ENCODE measurements at regions of chr21 and their contacts with region 1.

Region 1: DNA sequence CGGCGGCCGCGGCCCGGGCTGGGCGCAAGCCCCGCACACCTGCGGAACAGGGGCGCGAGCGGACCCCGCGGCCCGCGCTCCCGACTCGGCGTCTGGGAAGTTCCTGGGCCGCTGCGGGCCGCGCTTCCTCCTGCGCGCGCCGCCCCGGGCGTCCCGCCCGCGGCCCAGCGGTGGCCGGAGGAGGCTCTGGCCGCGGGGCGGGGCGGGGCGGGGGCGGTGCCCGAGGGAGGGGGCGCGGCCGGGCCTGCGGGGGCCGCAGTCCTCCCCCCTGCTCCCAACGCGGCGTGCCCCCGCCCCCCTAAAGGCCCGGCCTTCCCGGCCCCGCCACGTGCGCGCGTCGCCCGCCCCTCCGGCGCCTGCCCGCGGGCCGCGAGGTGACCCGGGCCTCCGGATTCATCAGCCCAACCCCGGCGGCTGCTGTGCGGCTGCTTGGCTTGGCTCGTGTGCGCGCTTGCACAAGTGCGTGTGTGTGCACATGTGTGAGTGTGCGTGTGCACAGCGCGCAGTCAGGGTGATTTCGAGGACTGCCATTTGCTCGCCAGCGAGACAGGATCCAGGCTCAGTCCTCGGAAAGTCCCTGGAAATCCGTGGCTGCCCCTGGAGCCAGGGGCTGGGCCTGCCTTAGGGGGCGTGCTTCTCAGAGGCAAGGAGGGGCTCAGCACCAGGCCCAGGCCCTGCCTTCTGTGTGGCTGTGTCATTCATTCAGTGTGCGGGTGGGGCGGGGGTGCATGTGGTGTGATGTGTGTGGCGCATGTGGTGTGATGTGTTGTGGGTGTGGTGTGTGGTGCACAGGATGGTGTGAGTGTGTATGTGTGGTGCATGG is at the start of gene C2CD2:
- DNase-seq: peak; percentile 65 to 74 (median 67)
- ATAC-seq: peak; percentile 84
- H3K4me3 ChIP-seq: peak within 1 kb of the TSS; percentile 65 to 88
- H3K27ac ChIP-seq: peak within 1 kb of the TSS; percentile 25 to 72 (median 62)
- H3K4me1 ChIP-seq: peaks cover 33% of the 10 kb centered on the region
- H3K27me3 ChIP-seq: no peaks in the 10 kb centered on the region
- CTCF ChIP-seq: peak in 1 of 7 experiments; percentile 2
- POLR2A ChIP-seq: peak in 1 of 3 donors; percentile 5
- total RNA-seq, gene C2CD2: 10.4 to 25.4 TPM

Region 2: GRCh38 chr21:41895643-41896493 is 58.2 kb before region 1 on chr21:
- intact Hi-C with region 1: loop called (anchors 10 kb)
- DNase-seq: no peak
- ATAC-seq: no peak
- H3K4me3 ChIP-seq: no peak overlapping the region
- H3K27ac ChIP-seq: no peak overlapping the region
- H3K4me1 ChIP-seq: peaks cover 6% of the 10 kb centered on the region
- H3K27me3 ChIP-seq: no peaks in the 10 kb centered on the region
- CTCF ChIP-seq: no peak
- POLR2A ChIP-seq: no peak

Measured in body of pancreas (tissue), 4 donors.